IMR-90 (cell line): ENCODE measurements at regions of chr2 and their contacts with region 1.

Region 1: GRCh38 chr2:241508240-241509154 is at the start of gene STK25:
- DNase-seq: peak; percentile 98
- ATAC-seq: peak; percentile 97
- H3K4me3 ChIP-seq: peak within 1 kb of the TSS; percentile 92
- H3K27ac ChIP-seq: peak within 1 kb of the TSS; percentile 77
- H3K4me1 ChIP-seq: peaks cover 17% of the 10 kb centered on the region
- H3K27me3 ChIP-seq: no peaks in the 10 kb centered on the region
- CTCF ChIP-seq: no peak
- POLR2A ChIP-seq: peak; percentile 51; the same call in 1 of the 2 replicates
- RAD21 ChIP-seq: no peak
- total RNA-seq, gene STK25: 203 and 258 TPM in 2 replicates

Region 2: GRCh38 chr2:241355983-241356870 is 152.3 kb before region 1 on chr2 and contains the start of gene FARP2:
- CTCF ChIA-PET with region 1: no interaction called
- POLR2A ChIA-PET with region 1: no interaction called
- dilution Hi-C with region 1: no loop called
- in situ Hi-C with region 1: no loop called
- intact Hi-C with region 1: loop called (anchors 2 kb)
- DNase-seq: peak; percentile 98
- ATAC-seq: peak; percentile 95
- H3K4me3 ChIP-seq: peak within 1 kb of the TSS; percentile 76
- H3K27ac ChIP-seq: peak within 1 kb of the TSS; percentile 70
- H3K4me1 ChIP-seq: peaks cover 8% of the 10 kb centered on the region
- H3K27me3 ChIP-seq: no peaks in the 10 kb centered on the region
- CTCF ChIP-seq: no peak
- POLR2A ChIP-seq: peak; percentile 93
- RAD21 ChIP-seq: no peak
- total RNA-seq, gene FARP2: 30.8 and 38.6 TPM in 2 replicates

Region 3: GRCh38 chr2:241609859-241610793 is 101.6 kb after region 1 on chr2:
- CTCF ChIA-PET with region 1: interaction called, 3 read pairs
- POLR2A ChIA-PET with region 1: no interaction called
- dilution Hi-C with region 1: no loop called
- in situ Hi-C with region 1: no loop called
- intact Hi-C with region 1: loop called (anchors 1 kb)
- DNase-seq: peak; percentile 62
- ATAC-seq: peak; percentile 97
- H3K4me3 ChIP-seq: peak overlapping the region; percentile 38
- H3K27ac ChIP-seq: no peak overlapping the region; the same call in 1 of the 2 replicates
- H3K4me1 ChIP-seq: peaks cover 13% of the 10 kb centered on the region
- H3K27me3 ChIP-seq: no peaks in the 10 kb centered on the region
- CTCF ChIP-seq: peak; percentile 66
- POLR2A ChIP-seq: 0 out of 2 replicates have a peak, but pooled peaks have one; percentile 27
- RAD21 ChIP-seq: peak; percentile 66

Region 4: DNA sequence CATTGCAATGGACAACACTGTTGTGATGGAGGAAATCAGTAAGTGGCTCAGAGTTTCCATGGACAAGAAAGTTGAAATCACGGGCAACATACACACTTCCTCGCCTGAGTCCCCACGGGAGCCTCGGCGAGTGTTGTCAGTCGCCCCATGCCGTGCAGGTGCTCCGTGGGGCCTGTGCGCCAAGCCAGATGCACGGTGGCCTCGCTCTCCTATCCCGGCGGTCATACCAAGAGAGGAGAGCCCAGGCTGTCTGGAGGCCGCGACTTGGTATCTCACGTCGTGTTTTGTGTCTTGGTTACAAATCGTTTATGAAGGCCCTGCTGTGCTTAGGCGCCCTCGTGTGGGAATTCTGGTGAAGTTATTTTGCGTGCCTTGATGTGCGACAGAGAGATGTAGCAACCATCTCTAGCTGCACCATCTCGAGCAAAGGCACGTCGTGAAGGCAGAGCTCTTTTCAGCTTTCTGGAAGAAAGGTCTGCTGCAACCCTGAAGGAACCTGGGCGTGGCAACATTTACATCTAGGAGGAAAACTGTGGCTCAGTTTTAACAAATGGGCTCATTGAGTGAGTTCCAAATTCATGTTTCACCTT is 150.7 kb after region 1 on chr2:
- CTCF ChIA-PET with region 1: no interaction called
- POLR2A ChIA-PET with region 1: no interaction called
- dilution Hi-C with region 1: no loop called
- in situ Hi-C with region 1: no loop called
- intact Hi-C with region 1: loop called (anchors 2 kb)
- DNase-seq: peak; percentile 73
- ATAC-seq: peak; percentile 89
- H3K4me3 ChIP-seq: no peak overlapping the region
- H3K27ac ChIP-seq: no peak overlapping the region
- H3K4me1 ChIP-seq: no peaks in the 10 kb centered on the region
- H3K27me3 ChIP-seq: no peaks in the 10 kb centered on the region
- CTCF ChIP-seq: peak; percentile 77
- POLR2A ChIP-seq: no peak
- RAD21 ChIP-seq: peak; percentile 88